Activated T-helper 1 cell treated with anti-CD3 and anti-CD28 coated beads, Interleukin-12 subunit alpha, Interleukin-12 subunit beta, Interleukin-2, Interleukin-4 antibody, amounts not matched to agents 30 ng/mL and 10 ng/mL and 1 ng/mL, durations not matched to agents 14 hours and 24 hours and 36 hours (primary cell): ENCODE measurements at regions of chr11 and their contacts with region 1.

Region 1: GRCh38 chr11:107565219-107565937 is at the start of gene ALKBH8:
- DNase-seq: peak; percentile 71
- H3K4me3 Mint-ChIP-seq: peak within 1 kb of the TSS; percentile 99
- H3K27ac Mint-ChIP-seq: peak within 1 kb of the TSS; percentile 98
- H3K4me1 Mint-ChIP-seq: peaks cover 52% of the 10 kb centered on the region
- H3K27me3 Mint-ChIP-seq: no peaks in the 10 kb centered on the region
- total RNA-seq, gene ALKBH8: 14.7 and 16.0 TPM in 2 replicates

Region 2: DNA sequence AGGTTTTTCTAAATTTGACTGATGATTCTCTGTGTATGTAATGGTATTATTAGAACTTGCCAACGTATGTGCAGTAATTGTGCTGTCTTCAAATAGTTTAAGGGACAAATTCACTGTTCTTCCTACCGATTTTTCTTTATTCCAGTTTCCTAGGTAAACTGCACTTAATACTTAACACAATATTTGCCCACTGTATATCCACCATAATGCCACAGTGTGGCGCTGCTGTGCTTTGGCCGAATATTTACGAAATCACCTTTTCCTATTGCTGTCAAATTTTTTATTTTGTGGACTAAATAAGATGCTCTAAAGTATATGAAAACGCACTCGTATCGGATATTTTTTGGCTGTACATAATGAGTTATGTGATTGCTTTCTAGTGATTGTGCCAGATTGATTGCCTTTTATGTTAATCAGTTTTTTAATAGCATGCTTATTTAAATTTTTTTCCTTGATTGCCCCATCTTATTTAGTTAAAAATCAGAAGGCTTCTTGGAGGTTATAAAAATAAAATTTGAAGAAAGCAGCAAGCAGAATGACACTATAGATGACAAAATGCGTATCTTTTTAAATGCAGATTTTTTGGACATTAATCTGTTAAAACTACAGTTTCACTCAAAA is 1477.5 kb before region 1 on chr11:
- intact Hi-C with region 1: loop called (anchors 10 kb)
- DNase-seq: no peak
- H3K4me3 Mint-ChIP-seq: no peak overlapping the region
- H3K27ac Mint-ChIP-seq: no peak overlapping the region
- H3K4me1 Mint-ChIP-seq: peaks cover 50% of the 10 kb centered on the region
- H3K27me3 Mint-ChIP-seq: no peaks in the 10 kb centered on the region

Region 3: DNA sequence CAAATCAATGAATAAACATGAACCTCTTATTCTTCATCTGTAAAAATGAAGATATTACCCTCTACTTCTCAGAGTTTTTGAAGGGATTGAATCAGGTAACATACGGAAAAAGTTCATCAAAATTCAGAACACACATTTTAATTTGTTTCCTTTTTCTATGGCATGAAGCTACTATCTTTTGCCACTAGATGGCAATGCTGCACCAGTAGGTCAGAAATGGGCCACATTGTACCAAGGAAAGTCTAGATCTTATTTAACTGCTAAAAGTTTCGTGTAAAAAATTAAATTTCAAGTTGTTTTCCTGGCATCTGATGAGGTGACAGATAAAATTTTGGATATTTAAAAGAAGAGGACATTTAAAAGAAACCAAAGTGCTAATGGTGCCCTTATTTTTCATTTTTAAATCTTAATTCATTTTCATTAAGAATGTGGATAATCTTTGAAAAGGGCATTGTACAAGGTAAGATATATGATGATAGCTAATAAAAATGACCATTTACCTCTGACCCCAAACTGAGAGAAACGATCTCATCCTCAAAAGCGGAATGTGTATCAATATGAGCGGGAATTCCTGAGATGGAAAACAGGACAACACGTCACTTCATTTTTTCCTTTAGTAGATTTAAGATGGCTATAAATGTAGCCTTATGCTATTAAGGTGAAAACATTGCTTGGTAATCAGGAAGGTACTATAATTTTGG is 16.0 kb before region 1 on chr11:
- intact Hi-C with region 1: loop called (anchors 1 kb)
- DNase-seq: no peak
- H3K4me3 Mint-ChIP-seq: no peak overlapping the region
- H3K27ac Mint-ChIP-seq: no peak overlapping the region
- H3K4me1 Mint-ChIP-seq: peaks cover 3% of the 10 kb centered on the region
- H3K27me3 Mint-ChIP-seq: no peaks in the 10 kb centered on the region

Region 4: GRCh38 chr11:107689317-107690202 is 124.2 kb after region 1 on chr11:
- intact Hi-C with region 1: loop called (anchors 1 kb)
- DNase-seq: peak; percentile 33
- H3K4me3 Mint-ChIP-seq: no peak overlapping the region
- H3K27ac Mint-ChIP-seq: no peak overlapping the region
- H3K4me1 Mint-ChIP-seq: no peaks in the 10 kb centered on the region
- H3K27me3 Mint-ChIP-seq: peaks cover 10% of the 10 kb centered on the region

Region 5: DNA sequence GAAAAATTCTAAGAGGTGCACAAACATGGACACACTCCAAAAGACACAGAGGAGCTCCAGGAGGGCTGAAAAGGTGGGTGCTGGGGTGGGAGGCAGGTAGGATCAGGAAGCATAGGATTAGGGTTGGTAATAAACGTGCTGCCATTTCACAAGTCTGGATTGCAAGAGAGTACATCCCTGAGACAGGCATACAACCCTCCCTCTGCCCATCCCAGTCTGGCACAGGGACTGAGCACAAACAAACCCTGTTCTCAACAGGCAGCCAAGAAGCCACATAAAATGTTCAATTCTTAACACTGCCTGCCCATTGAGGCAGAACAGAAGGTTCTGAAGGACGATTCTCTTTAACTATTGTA is 274.7 kb after region 1 on chr11:
- intact Hi-C with region 1: loop called (anchors 2 kb)
- DNase-seq: no peak
- H3K4me3 Mint-ChIP-seq: peak overlapping the region; percentile 64
- H3K27ac Mint-ChIP-seq: peak overlapping the region; percentile 88
- H3K4me1 Mint-ChIP-seq: peaks cover 46% of the 10 kb centered on the region
- H3K27me3 Mint-ChIP-seq: no peaks in the 10 kb centered on the region

Region 6: DNA sequence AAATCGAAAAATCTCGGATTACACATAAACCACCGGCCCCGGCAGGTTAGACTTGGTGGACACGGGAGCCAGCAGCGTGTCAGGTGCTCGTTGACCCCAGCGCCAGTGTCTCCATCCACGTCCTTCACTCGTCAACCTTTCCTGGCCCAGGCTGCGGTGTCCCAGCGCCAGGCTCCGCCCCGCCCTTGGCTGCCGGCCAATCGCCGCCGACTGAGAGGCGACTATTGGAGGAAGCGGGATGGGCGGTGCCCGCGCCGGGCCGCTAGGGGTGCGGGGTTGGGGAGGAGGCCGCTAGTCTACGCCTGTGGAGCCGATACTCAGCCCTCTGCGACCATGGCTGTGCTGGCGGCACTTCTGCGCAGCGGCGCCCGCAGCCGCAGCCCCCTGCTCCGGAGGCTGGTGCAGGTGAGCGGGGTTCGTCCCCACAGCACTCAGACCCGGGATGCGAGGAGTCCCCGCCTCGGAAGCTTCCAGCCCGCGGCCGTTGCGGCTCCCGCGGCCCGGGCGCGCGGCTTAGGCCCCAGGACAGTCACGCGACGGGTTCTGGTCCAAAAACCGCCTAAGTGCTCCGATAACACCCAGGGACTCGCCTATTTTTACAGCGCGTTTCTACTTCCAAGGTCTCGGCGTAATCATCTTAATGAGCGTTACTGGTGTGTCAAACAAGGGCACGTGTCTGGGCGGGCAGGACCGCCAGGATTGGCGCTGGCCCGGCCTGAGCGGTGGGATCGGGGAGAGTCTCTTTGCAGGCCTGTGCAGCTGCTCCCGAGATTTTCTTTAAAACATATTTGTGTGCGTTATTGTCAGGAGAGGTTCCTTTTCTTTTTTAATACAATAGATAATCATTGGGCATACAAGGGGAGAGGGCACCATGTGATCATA is 556.1 kb after region 1 on chr11 and contains the start of gene ACAT1:
- intact Hi-C with region 1: loop called (anchors 10 kb)
- DNase-seq: peak; percentile 95
- H3K4me3 Mint-ChIP-seq: peak within 1 kb of the TSS; percentile 97
- H3K27ac Mint-ChIP-seq: peak within 1 kb of the TSS; percentile 82
- H3K4me1 Mint-ChIP-seq: peaks cover 36% of the 10 kb centered on the region
- H3K27me3 Mint-ChIP-seq: no peaks in the 10 kb centered on the region
- total RNA-seq, gene ACAT1: 52.8 and 56.8 TPM in 2 replicates

Region 7: DNA sequence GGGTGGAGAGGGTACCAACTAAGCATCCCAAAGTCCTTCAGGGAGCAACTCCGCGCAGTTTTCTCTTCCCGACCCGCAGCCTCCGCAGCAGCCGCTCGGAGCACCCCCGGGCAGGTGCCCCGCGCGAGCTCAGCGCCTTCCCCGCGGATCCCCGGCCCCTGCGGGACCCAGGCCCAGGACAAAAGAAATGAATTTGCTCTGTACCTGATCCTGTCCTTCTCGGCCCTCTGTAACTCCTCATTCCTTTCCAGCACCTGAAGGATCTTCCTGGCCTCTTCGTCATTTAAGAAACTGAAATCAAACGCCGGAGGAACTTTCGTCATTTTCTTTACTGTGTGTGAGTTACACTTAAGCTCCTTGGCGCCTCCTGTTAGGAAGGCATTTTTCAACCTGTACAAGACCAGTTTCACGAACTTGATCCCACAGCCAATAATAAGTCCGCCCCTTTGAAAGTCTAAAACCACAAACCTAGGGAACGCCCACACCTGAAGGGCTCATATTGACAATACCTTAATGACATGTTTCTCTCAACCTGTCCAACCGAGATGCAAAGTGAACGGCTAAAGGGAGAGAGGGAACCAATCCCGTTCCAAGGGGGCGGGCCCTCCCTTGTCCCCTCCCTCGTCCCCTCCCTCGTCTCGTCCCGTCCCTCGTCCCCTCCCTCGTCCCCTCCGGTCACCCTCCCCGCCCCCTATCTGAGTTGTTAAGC is 1028.0 kb after region 1 on chr11 and contains the start of gene EXPH5:
- intact Hi-C with region 1: loop called (anchors 1 kb)
- DNase-seq: peak; percentile 76
- H3K4me3 Mint-ChIP-seq: peak within 1 kb of the TSS; percentile 89
- H3K27ac Mint-ChIP-seq: peak within 1 kb of the TSS; percentile 75
- H3K4me1 Mint-ChIP-seq: peaks cover 23% of the 10 kb centered on the region
- H3K27me3 Mint-ChIP-seq: peaks cover 29% of the 10 kb centered on the region
- total RNA-seq, gene EXPH5: 0.56 and 0.65 TPM in 2 replicates